Pancreas (tissue), 10 donors: ENCODE measurements at regions of chr7 and their contacts with region 1.

Region 1: GRCh38 chr7:74289659-74290514 is 680 bp downstream of the CLIP2 start:
- DNase-seq: peak; percentile 43 to 85 (median 64)
- ATAC-seq: peak; percentile 12 to 26 (median 23)
- H3K4me3 ChIP-seq: peak overlapping the region; percentile 55 to 82 (median 80)
- H3K27ac ChIP-seq: peak overlapping the region; percentile 31 to 82 (median 70)
- H3K4me1 ChIP-seq: peaks cover 23 to 40% (median 23%) of the 10 kb centered on the region in 3 donors
- H3K27me3 ChIP-seq: no peaks in the 10 kb centered on the region
- CTCF ChIP-seq: no peak

Region 2: DNA sequence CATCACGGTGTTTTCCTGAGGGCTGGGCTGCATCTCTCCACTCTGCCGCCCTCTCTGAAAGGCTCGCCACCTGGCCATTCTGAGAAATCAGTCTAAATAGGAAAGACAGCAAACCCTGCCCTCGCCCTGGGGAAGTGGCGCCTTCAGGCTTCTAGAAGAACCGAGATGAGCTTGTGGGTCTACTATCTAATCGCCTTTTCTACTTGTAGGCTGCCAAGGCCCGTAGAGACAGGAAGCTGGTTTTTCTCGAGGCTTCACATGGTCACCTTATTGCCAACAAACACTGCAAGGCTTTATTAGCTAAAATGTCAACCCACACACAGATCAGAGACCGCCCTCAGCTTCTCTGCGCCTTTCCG is 58.7 kb before region 1 on chr7:
- intact Hi-C with region 1: loop called in 1 of 3 experiments (anchors 10 kb)
- DNase-seq: no peak
- ATAC-seq: peak in 1 of 4 donors; percentile 19
- H3K4me3 ChIP-seq: no peak overlapping the region
- H3K27ac ChIP-seq: no peak overlapping the region
- H3K4me1 ChIP-seq: peaks cover 0 to 6% (median 0%) of the 10 kb centered on the region in 3 donors
- H3K27me3 ChIP-seq: no peaks in the 10 kb centered on the region
- CTCF ChIP-seq: no peak

Region 3: GRCh38 chr7:74466196-74466813 is 176.4 kb after region 1 on chr7:
- intact Hi-C with region 1: no loop called
- DNase-seq: no peak
- ATAC-seq: peak in 3 of 4 donors; percentile 37 to 78 (median 76)
- H3K4me3 ChIP-seq: no peak overlapping the region
- H3K27ac ChIP-seq: no peak overlapping the region
- H3K4me1 ChIP-seq: peaks cover 0 to 4% (median 3%) of the 10 kb centered on the region in 3 donors
- H3K27me3 ChIP-seq: no peaks in the 10 kb centered on the region
- CTCF ChIP-seq: no peak